ENCODE measurements at regions of chr1 and their contacts with region 1.

Region 1: GRCh38 chr1:226332947-226333346 is 24.0 kb upstream of the LIN9 start:
- DNase-seq: no peak
- ATAC-seq: no peak
- H3K4me3 Mint-ChIP-seq: no peak overlapping the region
- H3K27ac Mint-ChIP-seq: peak overlapping the region; percentile 55
- H3K4me1 Mint-ChIP-seq: peaks cover 7% of the 10 kb centered on the region
- H3K27me3 Mint-ChIP-seq: no peaks in the 10 kb centered on the region
- CTCF ChIP-seq: no peak

Region 2: DNA sequence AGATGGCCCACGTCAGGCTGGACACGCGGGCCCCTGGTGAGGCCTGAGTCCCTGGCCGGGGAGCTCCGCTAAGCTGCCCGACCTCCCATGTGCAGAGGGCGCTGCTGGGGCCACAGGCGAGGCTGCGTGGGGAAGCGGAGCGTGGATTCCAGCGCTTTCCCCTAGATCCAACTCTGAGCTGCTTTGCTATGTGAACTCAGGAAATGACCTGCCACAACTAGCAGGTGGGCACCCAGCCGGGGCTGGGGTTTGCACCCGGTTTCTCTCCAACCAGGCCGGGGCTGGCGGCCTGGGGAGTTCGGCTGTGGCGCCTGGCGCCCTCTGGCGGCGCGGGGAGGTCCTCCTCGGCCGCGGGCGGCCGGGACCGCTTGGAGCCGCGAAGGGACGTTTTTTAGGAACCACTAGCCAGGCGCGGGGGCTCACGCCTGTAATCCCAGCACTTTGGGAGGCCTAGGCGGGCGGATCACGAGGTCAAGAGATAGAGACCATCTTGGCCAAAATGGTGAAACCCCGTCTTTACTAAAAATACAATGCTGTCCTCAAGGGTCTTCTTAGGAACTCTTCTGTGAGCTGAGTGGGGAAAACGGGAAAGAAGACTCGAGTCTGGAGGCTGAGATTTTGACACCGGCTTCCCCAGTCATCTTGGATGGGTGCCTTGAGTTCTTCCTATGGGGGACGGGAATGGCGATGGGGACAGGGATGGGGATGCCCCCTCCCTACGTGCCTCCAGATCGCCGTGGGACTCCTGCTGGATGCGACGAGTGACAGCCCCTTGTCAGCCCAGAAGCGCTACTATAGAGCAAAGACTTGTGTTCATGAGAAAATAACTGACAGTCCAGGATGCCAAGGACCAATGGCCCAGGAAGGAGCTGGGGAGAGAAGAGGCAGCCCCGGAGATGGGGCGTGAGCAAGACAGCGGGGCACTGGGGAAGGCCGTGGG is 421.5 kb before region 1 on chr1:
- CTCF ChIA-PET with region 1: no interaction called
- POLR2A ChIA-PET with region 1: no interaction called
- intact Hi-C with region 1: no loop called
- DNase-seq: peak; percentile 66
- ATAC-seq: peak; percentile 90
- H3K4me3 Mint-ChIP-seq: no peak overlapping the region
- H3K27ac Mint-ChIP-seq: no peak overlapping the region
- H3K4me1 Mint-ChIP-seq: peaks cover 23% of the 10 kb centered on the region
- H3K27me3 Mint-ChIP-seq: no peaks in the 10 kb centered on the region
- CTCF ChIP-seq: peak; percentile 40

Region 3: DNA sequence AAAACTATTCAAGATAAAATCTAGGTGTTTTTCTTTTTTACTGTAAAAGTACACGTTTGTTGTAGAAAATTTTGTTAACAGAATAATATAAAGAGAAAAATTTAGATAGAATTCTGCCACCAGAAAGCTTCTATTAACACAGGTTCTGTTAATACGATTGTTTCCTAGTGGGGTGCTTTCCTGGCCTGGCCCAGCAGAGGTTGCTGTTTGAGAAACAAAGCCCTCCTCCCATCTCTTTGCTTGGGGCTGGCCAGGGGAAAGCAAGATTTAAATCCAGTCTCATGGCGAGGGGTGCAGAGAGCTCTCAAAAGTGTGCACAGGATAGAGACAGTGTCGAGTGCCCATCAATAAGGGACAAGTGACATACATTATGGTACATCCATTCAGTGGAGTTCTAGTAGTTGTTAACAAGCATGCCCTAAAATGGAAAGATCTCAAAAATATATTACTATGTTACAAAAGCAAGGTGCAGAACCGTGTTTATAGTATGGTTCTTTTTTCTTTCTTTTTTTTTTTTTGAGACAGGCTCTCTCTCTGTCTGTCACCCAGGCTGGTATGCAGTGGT is 131.8 kb before region 1 on chr1:
- CTCF ChIA-PET with region 1: interaction called, 10 read pairs
- POLR2A ChIA-PET with region 1: no interaction called
- intact Hi-C with region 1: loop called (anchors 2 kb)
- DNase-seq: no peak
- ATAC-seq: no peak
- H3K4me3 Mint-ChIP-seq: no peak overlapping the region
- H3K27ac Mint-ChIP-seq: no peak overlapping the region
- H3K4me1 Mint-ChIP-seq: peaks cover 27% of the 10 kb centered on the region
- H3K27me3 Mint-ChIP-seq: peaks cover 2% of the 10 kb centered on the region
- CTCF ChIP-seq: no peak

Region 4: GRCh38 chr1:226308723-226309315 is 24.1 kb before region 1 on chr1 and contains the start of gene LIN9:
- CTCF ChIA-PET with region 1: interaction called, 6 read pairs
- POLR2A ChIA-PET with region 1: interaction called, 4 read pairs
- intact Hi-C with region 1: loop called (anchors 2 kb)
- DNase-seq: peak; percentile 91
- ATAC-seq: peak; percentile 92
- H3K4me3 Mint-ChIP-seq: peak within 1 kb of the TSS; percentile 92
- H3K27ac Mint-ChIP-seq: peak within 1 kb of the TSS; percentile 65
- H3K4me1 Mint-ChIP-seq: peaks cover 10% of the 10 kb centered on the region
- H3K27me3 Mint-ChIP-seq: peaks cover 4% of the 10 kb centered on the region
- CTCF ChIP-seq: no peak
- total RNA-seq, gene LIN9: 3.5 and 4.5 TPM in 2 replicates

Region 5: GRCh38 chr1:226355669-226356551 is 23.0 kb after region 1 on chr1:
- CTCF ChIA-PET with region 1: interaction called, 4 read pairs
- POLR2A ChIA-PET with region 1: no interaction called
- intact Hi-C with region 1: loop called (anchors 2 kb)
- DNase-seq: no peak
- ATAC-seq: peak; percentile 69
- H3K4me3 Mint-ChIP-seq: peak overlapping the region; percentile 47
- H3K27ac Mint-ChIP-seq: peak overlapping the region; percentile 84
- H3K4me1 Mint-ChIP-seq: peaks cover 58% of the 10 kb centered on the region
- H3K27me3 Mint-ChIP-seq: no peaks in the 10 kb centered on the region
- CTCF ChIP-seq: no peak

Region 6: GRCh38 chr1:226370144-226370923 is 37.4 kb after region 1 on chr1:
- CTCF ChIA-PET with region 1: interaction called, 3 read pairs
- POLR2A ChIA-PET with region 1: interaction called, 6 read pairs
- intact Hi-C with region 1: loop called (anchors 1 kb)
- DNase-seq: no peak
- ATAC-seq: peak; percentile 74
- H3K4me3 Mint-ChIP-seq: peak overlapping the region; percentile 68
- H3K27ac Mint-ChIP-seq: peak overlapping the region; percentile 91
- H3K4me1 Mint-ChIP-seq: peaks cover 48% of the 10 kb centered on the region
- H3K27me3 Mint-ChIP-seq: no peaks in the 10 kb centered on the region
- CTCF ChIP-seq: no peak

Region 7: DNA sequence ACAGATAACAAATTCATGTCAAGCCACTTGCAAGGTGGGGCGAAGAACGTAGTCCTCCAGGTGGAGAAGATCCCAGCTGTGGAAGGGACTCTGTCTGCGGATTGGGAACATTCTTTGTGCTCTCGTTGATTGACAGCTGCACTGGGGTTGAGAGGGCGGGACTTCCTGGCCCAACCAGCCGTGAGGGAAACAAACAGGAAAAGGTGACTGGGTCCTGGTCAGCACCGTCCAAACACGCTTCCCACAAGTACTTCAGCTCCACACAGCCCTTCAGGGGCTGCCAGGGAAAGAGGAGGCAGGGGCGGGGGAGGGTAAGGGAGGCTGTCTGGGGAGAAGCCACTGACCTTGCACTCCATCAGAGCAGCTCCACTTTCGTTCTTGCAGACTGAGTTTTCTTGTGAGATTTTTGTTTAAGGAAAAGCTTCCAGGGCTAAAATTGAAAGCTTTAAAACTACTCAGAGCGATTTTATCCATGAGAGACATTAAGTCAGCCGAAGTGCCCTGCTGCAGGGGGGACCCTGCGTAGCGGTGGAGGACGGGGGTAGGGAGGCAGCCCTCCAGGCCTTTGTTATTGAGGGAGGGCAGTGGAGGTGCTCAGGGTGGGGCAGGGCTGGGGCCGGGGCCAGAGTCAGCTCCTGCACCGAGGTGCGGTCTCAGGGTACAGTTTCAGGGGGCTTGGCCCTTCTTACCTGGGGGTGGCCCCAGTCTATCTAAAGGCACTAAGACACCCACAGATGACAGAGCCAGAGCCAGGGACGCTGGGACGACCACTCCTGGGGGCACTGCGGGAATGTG is 194.1 kb after region 1 on chr1:
- CTCF ChIA-PET with region 1: no interaction called
- POLR2A ChIA-PET with region 1: no interaction called
- intact Hi-C with region 1: no loop called
- DNase-seq: no peak
- ATAC-seq: no peak
- H3K4me3 Mint-ChIP-seq: no peak overlapping the region
- H3K27ac Mint-ChIP-seq: no peak overlapping the region
- H3K4me1 Mint-ChIP-seq: no peaks in the 10 kb centered on the region
- H3K27me3 Mint-ChIP-seq: peaks cover 12% of the 10 kb centered on the region
- CTCF ChIP-seq: no peak

Measured in activated B cell treated with CpG ODN at 0.5 μM for 24 hours (primary cell).